CD4-positive, alpha-beta T cell (primary cell): ENCODE measurements at regions of chr4 and their contacts with region 1.

Region 1: GRCh38 chr4:141220655-141221605 is at the start of gene ZNF330:
- DNase-seq: peak; percentile 79 to 93 (median 84)
- ATAC-seq: peak; percentile 88
- H3K4me3 ChIP-seq: peak within 1 kb of the TSS; percentile 90
- H3K4me3 Mint-ChIP-seq: peak within 1 kb of the TSS; percentile 100
- H3K27ac ChIP-seq: peak within 1 kb of the TSS; percentile 82 to 90
- H3K27ac Mint-ChIP-seq: peak within 1 kb of the TSS; percentile 97
- H3K4me1 ChIP-seq: peaks cover 5% of the 10 kb centered on the region
- H3K4me1 Mint-ChIP-seq: peaks cover 56% of the 10 kb centered on the region
- H3K27me3 ChIP-seq: no peaks in the 10 kb centered on the region
- H3K27me3 Mint-ChIP-seq: peaks cover 4% of the 10 kb centered on the region
- CTCF ChIP-seq: no peak
- total RNA-seq, gene ZNF330: 41.1 to 43.8 TPM

Region 2: DNA sequence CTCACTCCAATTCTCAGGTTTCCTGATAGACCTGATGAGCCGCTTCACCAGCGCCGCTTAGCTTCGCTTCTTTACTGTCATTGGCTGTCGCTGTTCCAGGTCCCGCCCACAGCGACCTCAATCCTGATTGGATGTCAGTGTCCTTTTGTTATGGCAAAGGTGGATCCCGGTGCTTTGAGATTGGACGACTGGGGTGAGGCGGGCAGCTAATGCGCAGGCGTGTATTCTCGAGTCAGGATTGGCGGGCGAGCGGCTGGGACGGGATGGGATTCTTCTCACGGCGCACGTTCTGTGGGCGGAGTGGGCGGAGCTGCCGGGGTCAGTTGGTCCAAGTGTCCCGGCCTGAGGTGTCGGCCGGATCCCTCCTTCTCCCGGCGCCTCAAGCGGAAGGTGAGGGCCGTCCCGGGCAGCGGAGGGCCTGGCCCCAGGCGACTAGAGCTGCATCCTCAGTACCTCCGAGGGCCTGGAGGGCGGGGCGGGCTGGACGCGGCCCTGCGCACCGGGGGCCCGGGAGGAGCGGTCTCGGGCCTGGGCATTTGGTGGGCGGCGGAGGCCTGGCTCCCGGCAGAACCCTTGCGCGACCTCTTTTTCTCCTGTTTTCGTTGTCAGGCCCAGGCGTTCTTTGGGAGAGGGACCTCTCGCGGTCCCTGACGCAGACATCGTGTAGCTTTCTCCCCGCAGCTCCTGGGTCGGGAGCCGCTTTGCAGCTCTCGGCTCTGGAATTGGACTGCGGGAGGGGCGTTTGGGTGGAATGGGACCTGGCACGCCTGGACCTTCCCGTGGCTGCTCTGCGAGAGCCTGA is 847.4 kb before region 1 on chr4 and contains the start of gene SCOC:
- CTCF ChIA-PET with region 1: no interaction called
- POLR2A ChIA-PET with region 1: no interaction called
- intact Hi-C with region 1: loop called in 1 of 2 experiments (anchors 10 kb)
- DNase-seq: peak; percentile 90 to 98 (median 94)
- ATAC-seq: peak; percentile 95
- H3K4me3 ChIP-seq: peak within 1 kb of the TSS; percentile 94
- H3K4me3 Mint-ChIP-seq: peak within 1 kb of the TSS; percentile 87
- H3K27ac ChIP-seq: peak within 1 kb of the TSS; percentile 65 to 83
- H3K27ac Mint-ChIP-seq: no peak within 1 kb of the TSS
- H3K4me1 ChIP-seq: peaks cover 14% of the 10 kb centered on the region
- H3K4me1 Mint-ChIP-seq: peaks cover 32% of the 10 kb centered on the region
- H3K27me3 ChIP-seq: no peaks in the 10 kb centered on the region
- H3K27me3 Mint-ChIP-seq: no peaks in the 10 kb centered on the region
- CTCF ChIP-seq: no peak
- total RNA-seq, gene SCOC: 5.9 to 6.8 TPM

Region 3: GRCh38 chr4:140523857-140524742 is 696.8 kb before region 1 on chr4 and contains the start of gene ELMOD2:
- CTCF ChIA-PET with region 1: no interaction called
- POLR2A ChIA-PET with region 1: no interaction called
- intact Hi-C with region 1: loop called in 1 of 2 experiments (anchors 10 kb)
- DNase-seq: peak; percentile 93 to 99 (median 96)
- ATAC-seq: peak; percentile 99
- H3K4me3 ChIP-seq: peak within 1 kb of the TSS; percentile 65
- H3K4me3 Mint-ChIP-seq: peak within 1 kb of the TSS; percentile 91
- H3K27ac ChIP-seq: peak within 1 kb of the TSS in 1 of 2 donors; percentile 58
- H3K27ac Mint-ChIP-seq: peak within 1 kb of the TSS; percentile 79
- H3K4me1 ChIP-seq: peaks cover 10% of the 10 kb centered on the region
- H3K4me1 Mint-ChIP-seq: peaks cover 26% of the 10 kb centered on the region
- H3K27me3 ChIP-seq: no peaks in the 10 kb centered on the region
- H3K27me3 Mint-ChIP-seq: no peaks in the 10 kb centered on the region
- CTCF ChIP-seq: peak; percentile 82
- total RNA-seq, gene ELMOD2: 12.3 to 14.9 TPM

Region 4: GRCh38 chr4:141311241-141312204 is 90.6 kb after region 1 on chr4:
- CTCF ChIA-PET with region 1: no interaction called
- POLR2A ChIA-PET with region 1: no interaction called
- intact Hi-C with region 1: no loop called
- DNase-seq: peak in 2 of 14 experiments; percentile 12 to 16
- ATAC-seq: no peak
- H3K4me3 ChIP-seq: no peak overlapping the region
- H3K4me3 Mint-ChIP-seq: no peak overlapping the region
- H3K27ac ChIP-seq: no peak overlapping the region
- H3K27ac Mint-ChIP-seq: no peak overlapping the region
- H3K4me1 ChIP-seq: peaks cover 3% of the 10 kb centered on the region
- H3K4me1 Mint-ChIP-seq: no peaks in the 10 kb centered on the region
- H3K27me3 ChIP-seq: no peaks in the 10 kb centered on the region
- H3K27me3 Mint-ChIP-seq: peaks cover 4% of the 10 kb centered on the region
- CTCF ChIP-seq: no peak

Region 5: GRCh38 chr4:141636082-141636770 is 415.3 kb after region 1 on chr4 and contains the start of gene IL15:
- CTCF ChIA-PET with region 1: no interaction called
- POLR2A ChIA-PET with region 1: no interaction called
- intact Hi-C with region 1: loop called in 1 of 2 experiments (anchors 5 kb)
- DNase-seq: peak; percentile 29 to 87 (median 49)
- ATAC-seq: peak; percentile 77
- H3K4me3 ChIP-seq: peak within 1 kb of the TSS; percentile 91
- H3K4me3 Mint-ChIP-seq: peak within 1 kb of the TSS; percentile 97
- H3K27ac ChIP-seq: peak within 1 kb of the TSS in 1 of 2 donors; percentile 20
- H3K27ac Mint-ChIP-seq: no peak within 1 kb of the TSS
- H3K4me1 ChIP-seq: peaks cover 12% of the 10 kb centered on the region
- H3K4me1 Mint-ChIP-seq: peaks cover 21% of the 10 kb centered on the region
- H3K27me3 ChIP-seq: no peaks in the 10 kb centered on the region
- H3K27me3 Mint-ChIP-seq: peaks cover 22% of the 10 kb centered on the region
- CTCF ChIP-seq: no peak
- total RNA-seq, gene IL15: 0.60 to 1.3 TPM

Region 6: GRCh38 chr4:143184217-143185116 is 1963.5 kb after region 1 on chr4 and contains the start of gene USP38:
- CTCF ChIA-PET with region 1: no interaction called
- POLR2A ChIA-PET with region 1: no interaction called
- intact Hi-C with region 1: loop called in 1 of 2 experiments (anchors 5 kb)
- DNase-seq: peak; percentile 73 to 96 (median 80)
- ATAC-seq: peak; percentile 84
- H3K4me3 ChIP-seq: peak within 1 kb of the TSS; percentile 70
- H3K4me3 Mint-ChIP-seq: peak within 1 kb of the TSS; percentile 91
- H3K27ac ChIP-seq: peak within 1 kb of the TSS; percentile 93 to 97
- H3K27ac Mint-ChIP-seq: peak within 1 kb of the TSS; percentile 97
- H3K4me1 ChIP-seq: peaks cover 7% of the 10 kb centered on the region
- H3K4me1 Mint-ChIP-seq: peaks cover 75% of the 10 kb centered on the region
- H3K27me3 ChIP-seq: no peaks in the 10 kb centered on the region
- H3K27me3 Mint-ChIP-seq: no peaks in the 10 kb centered on the region
- CTCF ChIP-seq: no peak
- total RNA-seq, gene USP38: 34.2 to 35.7 TPM